Heart left ventricle (tissue), 16 donors: ENCODE measurements at regions of chr11 and their contacts with region 1.

Region 1: GRCh38 chr11:125625630-125626287 is 796 bp downstream of the CHEK1 start:
- DNase-seq: peak; percentile 86 to 92 (median 90)
- ATAC-seq: peak; percentile 92 to 97 (median 96)
- H3K4me3 ChIP-seq: peak overlapping the region; percentile 40 to 80 (median 74)
- H3K27ac ChIP-seq: peak overlapping the region; percentile 70 to 98 (median 95)
- H3K4me1 ChIP-seq: peaks cover 4 to 23% (median 15%) of the 10 kb centered on the region in 12 donors
- H3K27me3 ChIP-seq: no peaks in the 10 kb centered on the region
- CTCF ChIP-seq: no peak
- POLR2A ChIP-seq: peak in 1 of 2 donors; percentile 48

Region 2: GRCh38 chr11:125494974-125495725 is 130.6 kb before region 1 on chr11:
- intact Hi-C with region 1: loop called in 1 of 10 experiments (anchors 10 kb)
- DNase-seq: peak; percentile 23 to 72 (median 44)
- ATAC-seq: peak; percentile 29 to 73 (median 66)
- H3K4me3 ChIP-seq: peak overlapping the region; percentile 18 to 85 (median 66)
- H3K27ac ChIP-seq: peak overlapping the region in 7 of 12 donors; percentile 15 to 87 (median 66)
- H3K4me1 ChIP-seq: peaks cover 0 to 19% (median 9%) of the 10 kb centered on the region in 12 donors
- H3K27me3 ChIP-seq: peaks cover 0 to 46% (median 0%) of the 10 kb centered on the region in 9 donors
- CTCF ChIP-seq: no peak
- POLR2A ChIP-seq: no peak

Region 3: GRCh38 chr11:125579811-125580210 is 45.9 kb before region 1 on chr11:
- intact Hi-C with region 1: loop called in 1 of 10 experiments (anchors 5 kb)
- DNase-seq: no peak
- ATAC-seq: no peak
- H3K4me3 ChIP-seq: no peak overlapping the region
- H3K27ac ChIP-seq: no peak overlapping the region
- H3K4me1 ChIP-seq: no peaks in the 10 kb centered on the region
- H3K27me3 ChIP-seq: no peaks in the 10 kb centered on the region
- CTCF ChIP-seq: no peak
- POLR2A ChIP-seq: no peak

Region 4: DNA sequence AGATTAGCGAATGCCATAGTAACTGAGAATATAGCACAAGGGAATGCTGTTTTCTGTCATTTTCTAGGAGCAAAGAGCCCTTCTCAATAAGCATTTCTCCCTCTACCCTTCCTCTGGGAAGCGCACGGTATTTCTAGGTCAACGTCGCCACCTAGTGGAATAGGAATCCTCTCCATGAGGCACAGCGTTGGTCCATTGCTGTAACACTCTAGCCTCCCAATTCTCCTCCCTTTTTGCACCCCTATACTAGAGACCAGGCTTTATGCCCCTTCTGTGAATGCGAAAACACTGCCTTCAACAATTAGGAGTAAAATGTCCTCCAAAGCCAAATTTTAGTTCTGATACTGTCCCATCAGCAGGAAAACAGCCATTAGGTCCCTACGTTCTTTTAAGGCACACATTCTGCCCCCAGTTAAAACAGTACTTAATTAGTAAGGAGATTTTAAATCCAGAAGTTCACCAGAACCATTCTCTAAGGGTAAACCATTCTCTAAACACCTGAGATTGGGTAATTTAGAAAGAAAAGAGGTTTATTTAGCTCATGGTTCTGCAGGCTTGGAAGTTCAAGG is 248.9 kb after region 1 on chr11:
- intact Hi-C with region 1: loop called in 5 of 10 experiments (anchors 5 kb)
- DNase-seq: peak in 4 of 5 donors; percentile 41 to 55 (median 48)
- ATAC-seq: peak in 3 of 4 donors; percentile 91 to 98 (median 93)
- H3K4me3 ChIP-seq: peak overlapping the region in 8 of 12 donors; percentile 12 to 38 (median 28)
- H3K27ac ChIP-seq: no peak overlapping the region
- H3K4me1 ChIP-seq: no peaks in the 10 kb centered on the region
- H3K27me3 ChIP-seq: no peaks in the 10 kb centered on the region
- CTCF ChIP-seq: peak; percentile 60 to 82 (median 72)
- POLR2A ChIP-seq: no peak

Region 5: GRCh38 chr11:126268708-126269579 is 643.2 kb after region 1 on chr11 and contains the starts of genes FOXRED1 and SRPRA:
- intact Hi-C with region 1: loop called in 1 of 10 experiments (anchors 10 kb)
- DNase-seq: peak; percentile 100
- ATAC-seq: peak; percentile 99 to 100 (median 100)
- H3K4me3 ChIP-seq: peak within 1 kb of the TSS; percentile 63 to 99 (median 78)
- H3K27ac ChIP-seq: peak within 1 kb of the TSS; percentile 56 to 97 (median 90)
- H3K4me1 ChIP-seq: peaks cover 0 to 26% (median 15%) of the 10 kb centered on the region in 12 donors
- H3K27me3 ChIP-seq: no peaks in the 10 kb centered on the region
- CTCF ChIP-seq: no peak
- POLR2A ChIP-seq: peak in 1 of 2 donors; percentile 78
- total RNA-seq, gene FOXRED1: 22.0 to 49.1 (median 31.8) TPM
- total RNA-seq, gene SRPRA: 65.0 to 90.8 (median 79.3) TPM